PC-9 (cell line): ENCODE measurements at regions of chr13 and their contacts with region 1.

Region 1: GRCh38 chr13:95745752-95746151 is 68.8 kb downstream of the DNAJC3 start:
- DNase-seq: no peak
- H3K4me3 ChIP-seq: no peak overlapping the region
- H3K27ac ChIP-seq: no peak overlapping the region
- H3K4me1 ChIP-seq: no peaks in the 10 kb centered on the region
- H3K27me3 ChIP-seq: no peaks in the 10 kb centered on the region
- CTCF ChIP-seq: no peak

Region 2: GRCh38 chr13:95636853-95637252 is 108.9 kb before region 1 on chr13:
- CTCF ChIA-PET with region 1: no interaction called
- POLR2A ChIA-PET with region 1: no interaction called
- intact Hi-C with region 1: no loop called
- DNase-seq: no peak
- H3K4me3 ChIP-seq: no peak overlapping the region
- H3K27ac ChIP-seq: no peak overlapping the region
- H3K4me1 ChIP-seq: no peaks in the 10 kb centered on the region
- H3K27me3 ChIP-seq: no peaks in the 10 kb centered on the region
- CTCF ChIP-seq: no peak

Region 3: GRCh38 chr13:95714142-95714829 is 31.5 kb before region 1 on chr13:
- CTCF ChIA-PET with region 1: interaction called, 9 read pairs
- POLR2A ChIA-PET with region 1: no interaction called
- intact Hi-C with region 1: loop called (anchors 5 kb)
- DNase-seq: peak in 1 of 2 experiments; percentile 95
- H3K4me3 ChIP-seq: peak overlapping the region; percentile 5; the same call in 1 of the 2 replicates
- H3K27ac ChIP-seq: peak overlapping the region; percentile 72
- H3K4me1 ChIP-seq: peaks cover 36% of the 10 kb centered on the region
- H3K27me3 ChIP-seq: no peaks in the 10 kb centered on the region
- CTCF ChIP-seq: no peak